ENCODE measurements at regions of chr1 and their contacts with region 1.

Region 1: GRCh38 chr1:89843281-89844121 is 22.7 kb downstream of the LRRC8D start:
- DNase-seq: peak; percentile 89
- H3K4me3 Mint-ChIP-seq: peak overlapping the region; percentile 93
- H3K27ac Mint-ChIP-seq: peak overlapping the region; percentile 92
- H3K4me1 Mint-ChIP-seq: peaks cover 51% of the 10 kb centered on the region
- H3K27me3 Mint-ChIP-seq: no peaks in the 10 kb centered on the region

Region 2: DNA sequence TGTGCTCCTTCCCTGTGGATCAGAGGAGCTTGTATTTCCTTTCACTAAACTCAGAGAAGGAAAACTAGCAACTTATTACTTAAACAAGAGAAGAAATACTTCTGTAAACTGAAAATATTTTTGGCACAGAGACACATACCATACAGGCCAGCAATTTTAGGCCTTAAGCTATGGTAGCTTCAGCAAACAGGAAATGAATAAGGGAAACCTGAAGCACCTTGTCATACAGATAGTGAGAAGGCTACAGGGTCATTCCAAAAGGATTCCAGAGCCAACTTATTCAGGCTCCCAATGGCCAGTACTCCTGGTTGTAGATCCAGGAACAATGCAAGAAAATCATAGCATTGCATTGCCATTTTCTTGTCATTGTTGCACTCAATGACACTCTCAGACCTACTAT is 842.0 kb before region 1 on chr1:
- CTCF ChIA-PET with region 1: no interaction called
- POLR2A ChIA-PET with region 1: no interaction called
- intact Hi-C with region 1: no loop called
- DNase-seq: no peak
- H3K4me3 Mint-ChIP-seq: no peak overlapping the region
- H3K27ac Mint-ChIP-seq: no peak overlapping the region
- H3K4me1 Mint-ChIP-seq: peaks cover 32% of the 10 kb centered on the region
- H3K27me3 Mint-ChIP-seq: no peaks in the 10 kb centered on the region

Region 3: GRCh38 chr1:89632657-89633247 is 210.7 kb before region 1 on chr1 and contains the start of gene LRRC8C:
- CTCF ChIA-PET with region 1: interaction called, 6 read pairs
- POLR2A ChIA-PET with region 1: interaction called, 3 read pairs
- intact Hi-C with region 1: loop called (anchors 2 kb)
- DNase-seq: peak; percentile 90
- H3K4me3 Mint-ChIP-seq: peak within 1 kb of the TSS; percentile 93
- H3K27ac Mint-ChIP-seq: peak within 1 kb of the TSS; percentile 95
- H3K4me1 Mint-ChIP-seq: peaks cover 68% of the 10 kb centered on the region
- H3K27me3 Mint-ChIP-seq: no peaks in the 10 kb centered on the region
- total RNA-seq, gene LRRC8C: 36.4 to 40.4 TPM

Region 4: GRCh38 chr1:89692601-89693521 is 150.6 kb before region 1 on chr1:
- CTCF ChIA-PET with region 1: no interaction called
- POLR2A ChIA-PET with region 1: no interaction called
- intact Hi-C with region 1: no loop called
- DNase-seq: no peak
- H3K4me3 Mint-ChIP-seq: no peak overlapping the region
- H3K27ac Mint-ChIP-seq: peak overlapping the region; percentile 86
- H3K4me1 Mint-ChIP-seq: peaks cover 93% of the 10 kb centered on the region
- H3K27me3 Mint-ChIP-seq: no peaks in the 10 kb centered on the region

Region 5: GRCh38 chr1:89804642-89805237 is 38.8 kb before region 1 on chr1:
- CTCF ChIA-PET with region 1: interaction called, 13 read pairs
- POLR2A ChIA-PET with region 1: no interaction called
- intact Hi-C with region 1: loop called (anchors 2 kb)
- DNase-seq: peak; percentile 90
- H3K4me3 Mint-ChIP-seq: no peak overlapping the region
- H3K27ac Mint-ChIP-seq: no peak overlapping the region
- H3K4me1 Mint-ChIP-seq: no peaks in the 10 kb centered on the region
- H3K27me3 Mint-ChIP-seq: no peaks in the 10 kb centered on the region

Region 6: GRCh38 chr1:89826594-89826993 is 16.9 kb before region 1 on chr1:
- CTCF ChIA-PET with region 1: interaction called, 16 read pairs
- POLR2A ChIA-PET with region 1: interaction called, 20 read pairs
- intact Hi-C with region 1: loop called (anchors 1 kb)
- DNase-seq: no peak
- H3K4me3 Mint-ChIP-seq: no peak overlapping the region
- H3K27ac Mint-ChIP-seq: no peak overlapping the region
- H3K4me1 Mint-ChIP-seq: peaks cover 15% of the 10 kb centered on the region
- H3K27me3 Mint-ChIP-seq: no peaks in the 10 kb centered on the region

Region 7: GRCh38 chr1:89881415-89882058 is 38.0 kb after region 1 on chr1:
- CTCF ChIA-PET with region 1: interaction called, 3 read pairs
- POLR2A ChIA-PET with region 1: interaction called, 3 read pairs
- intact Hi-C with region 1: loop called (anchors 2 kb)
- DNase-seq: no peak
- H3K4me3 Mint-ChIP-seq: no peak overlapping the region
- H3K27ac Mint-ChIP-seq: peak overlapping the region; percentile 24
- H3K4me1 Mint-ChIP-seq: peaks cover 46% of the 10 kb centered on the region
- H3K27me3 Mint-ChIP-seq: no peaks in the 10 kb centered on the region

Region 8: GRCh38 chr1:89953072-89953626 is 109.6 kb after region 1 on chr1:
- CTCF ChIA-PET with region 1: interaction called, 3 read pairs
- POLR2A ChIA-PET with region 1: no interaction called
- intact Hi-C with region 1: loop called (anchors 1 kb)
- DNase-seq: peak; percentile 61
- H3K4me3 Mint-ChIP-seq: no peak overlapping the region
- H3K27ac Mint-ChIP-seq: no peak overlapping the region
- H3K4me1 Mint-ChIP-seq: peaks cover 14% of the 10 kb centered on the region
- H3K27me3 Mint-ChIP-seq: no peaks in the 10 kb centered on the region

Region 9: GRCh38 chr1:89994805-89995597 is 151.5 kb after region 1 on chr1 and contains the start of gene ZNF326:
- CTCF ChIA-PET with region 1: interaction called, 16 read pairs
- POLR2A ChIA-PET with region 1: interaction called, 9 read pairs
- intact Hi-C with region 1: loop called (anchors 2 kb)
- DNase-seq: peak; percentile 96
- H3K4me3 Mint-ChIP-seq: peak within 1 kb of the TSS; percentile 99
- H3K27ac Mint-ChIP-seq: peak within 1 kb of the TSS; percentile 89
- H3K4me1 Mint-ChIP-seq: peaks cover 39% of the 10 kb centered on the region
- H3K27me3 Mint-ChIP-seq: no peaks in the 10 kb centered on the region
- total RNA-seq, gene ZNF326: 17.2 to 17.3 TPM

Measured in activated CD4-positive, alpha-beta memory T cell treated with anti-CD3 and anti-CD28 coated beads for 36 hours (primary cell).